ENCODE measurements at regions of chr5 and their contacts with region 1.

Region 1: GRCh38 chr5:146873186-146873917 is 5.2 kb downstream of the PPP2R2B start:
- DNase-seq: no peak
- H3K4me3 ChIP-seq: no peak overlapping the region
- H3K27ac ChIP-seq: no peak overlapping the region
- H3K4me1 ChIP-seq: peaks cover 0 to 11% of the 10 kb centered on the region in 2 donors
- H3K27me3 ChIP-seq: no peaks in the 10 kb centered on the region
- CTCF ChIP-seq: no peak

Region 2: GRCh38 chr5:146213210-146213826 is 660.0 kb before region 1 on chr5:
- intact Hi-C with region 1: no loop called
- DNase-seq: no peak
- H3K4me3 ChIP-seq: no peak overlapping the region
- H3K27ac ChIP-seq: no peak overlapping the region
- H3K4me1 ChIP-seq: peaks cover 0 to 25% of the 10 kb centered on the region in 2 donors
- H3K27me3 ChIP-seq: no peaks in the 10 kb centered on the region
- CTCF ChIP-seq: no peak

Region 3: GRCh38 chr5:146815421-146815820 is 57.9 kb before region 1 on chr5:
- intact Hi-C with region 1: loop called (anchors 5 kb)
- DNase-seq: no peak
- H3K4me3 ChIP-seq: no peak overlapping the region
- H3K27ac ChIP-seq: no peak overlapping the region
- H3K4me1 ChIP-seq: peaks cover 0 to 3% of the 10 kb centered on the region in 2 donors
- H3K27me3 ChIP-seq: no peaks in the 10 kb centered on the region
- CTCF ChIP-seq: no peak

Measured in ascending aorta (tissue), 2 donors.